ENCODE measurements at regions of chr3 and their contacts with region 1.

Region 1: GRCh38 chr3:99833617-99834205 is 16.0 kb downstream of the CMSS1 start:
- DNase-seq: no peak
- H3K4me3 ChIP-seq: no peak overlapping the region
- H3K27ac ChIP-seq: peak overlapping the region in 3 of 4 donors; percentile 29 to 66 (median 50)
- H3K4me1 ChIP-seq: peaks cover 0 to 8% (median 5%) of the 10 kb centered on the region in 4 donors
- H3K27me3 ChIP-seq: no peaks in the 10 kb centered on the region
- CTCF ChIP-seq: no peak
- EP300 ChIP-seq: no peak
- POLR2A ChIP-seq: no peak

Region 2: DNA sequence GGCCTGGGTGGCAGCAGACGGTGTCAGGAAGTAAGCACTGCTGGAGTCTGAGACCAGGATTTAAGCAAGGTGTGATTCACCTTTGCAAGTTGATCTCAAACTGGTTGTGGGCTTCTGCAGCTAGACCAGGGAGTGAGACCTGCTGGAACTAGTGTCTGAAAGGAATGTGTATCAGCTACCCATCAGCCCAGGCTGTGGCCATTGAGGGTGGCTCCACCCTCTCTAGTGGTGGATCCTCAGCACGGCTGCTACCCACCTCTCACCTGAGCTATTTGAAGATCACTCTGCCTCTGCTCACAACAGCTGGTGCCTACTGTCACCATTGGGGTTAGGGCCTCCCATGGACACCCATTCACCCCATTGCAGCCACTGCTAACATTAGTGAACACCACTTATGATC is 792.0 kb before region 1 on chr3:
- intact Hi-C with region 1: no loop called
- DNase-seq: no peak
- H3K4me3 ChIP-seq: no peak overlapping the region
- H3K27ac ChIP-seq: no peak overlapping the region
- H3K4me1 ChIP-seq: no peaks in the 10 kb centered on the region
- H3K27me3 ChIP-seq: no peaks in the 10 kb centered on the region
- CTCF ChIP-seq: no peak
- EP300 ChIP-seq: no peak
- POLR2A ChIP-seq: no peak

Region 3: GRCh38 chr3:100254168-100254777 is 420.6 kb after region 1 on chr3:
- intact Hi-C with region 1: loop called (anchors 2 kb)
- DNase-seq: peak; percentile 82
- H3K4me3 ChIP-seq: no peak overlapping the region
- H3K27ac ChIP-seq: peak overlapping the region; percentile 16 to 73 (median 58)
- H3K4me1 ChIP-seq: peaks cover 0 to 15% (median 13%) of the 10 kb centered on the region in 4 donors
- H3K27me3 ChIP-seq: no peaks in the 10 kb centered on the region
- CTCF ChIP-seq: peak; percentile 63 to 71 (median 68)
- EP300 ChIP-seq: no peak
- POLR2A ChIP-seq: no peak

Region 4: DNA sequence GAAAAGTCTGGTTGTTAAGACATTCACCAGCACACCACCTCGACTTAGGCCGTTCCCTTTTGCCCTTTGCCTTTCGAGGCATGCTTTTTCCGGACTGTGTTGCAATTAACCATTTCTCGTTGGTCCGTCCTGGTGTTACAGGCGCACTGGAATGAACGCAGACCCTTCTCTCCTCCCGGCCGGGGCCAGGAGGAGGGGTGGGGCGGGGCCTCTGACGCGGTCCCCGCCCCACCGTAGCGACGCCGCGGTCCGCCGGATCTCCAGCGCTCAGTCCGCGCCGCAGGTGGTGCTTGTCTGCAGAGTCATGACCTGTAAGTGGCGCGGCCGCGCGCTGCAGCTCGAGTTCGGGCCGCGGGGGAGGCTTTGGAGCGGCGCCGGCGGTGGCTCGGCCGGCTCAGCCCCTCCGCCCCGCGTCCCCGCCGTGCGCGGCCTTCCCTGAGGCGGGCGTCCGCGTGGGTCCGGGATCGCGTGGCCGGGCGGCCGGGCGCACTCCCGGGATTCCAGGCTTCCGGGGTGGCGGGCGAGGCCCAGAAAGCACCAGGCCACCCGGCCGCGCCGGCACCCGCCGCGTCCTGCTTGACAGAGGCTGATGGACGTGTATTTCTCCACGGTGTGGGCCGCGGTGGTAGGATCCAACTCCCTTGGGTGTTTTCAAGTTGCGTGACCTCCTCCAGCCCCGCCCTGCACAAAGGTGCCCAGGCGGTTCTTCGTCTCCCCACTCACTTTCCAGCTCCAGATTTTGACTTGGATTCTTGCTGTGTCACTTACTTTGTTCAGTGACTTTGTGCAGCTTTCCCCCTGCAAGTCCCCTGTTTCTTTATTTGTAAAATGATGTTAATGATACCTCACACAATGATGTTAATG is 501.0 kb after region 1 on chr3 and contains the start of gene NIT2:
- intact Hi-C with region 1: loop called (anchors 10 kb)
- DNase-seq: peak; percentile 92
- H3K4me3 ChIP-seq: peak within 1 kb of the TSS; percentile 59 to 74 (median 68)
- H3K27ac ChIP-seq: peak within 1 kb of the TSS; percentile 77 to 86 (median 84)
- H3K4me1 ChIP-seq: peaks cover 0 to 17% (median 8%) of the 10 kb centered on the region in 4 donors
- H3K27me3 ChIP-seq: no peaks in the 10 kb centered on the region
- CTCF ChIP-seq: no peak
- EP300 ChIP-seq: no peak
- POLR2A ChIP-seq: no peak
- total RNA-seq, gene NIT2: 17.5 to 28.2 (median 23.6) TPM